Activated CD8-positive, alpha-beta T cell treated with anti-CD3 and anti-CD28 coated beads for 36 hours (primary cell): ENCODE measurements at regions of chr9 and their contacts with region 1.

Region 1: GRCh38 chr9:35675732-35676392 is 2.1 kb downstream of the CA9 start:
- DNase-seq: peak; percentile 57
- ATAC-seq: peak; percentile 86
- H3K4me3 Mint-ChIP-seq: peak overlapping the region; percentile 64
- H3K27ac Mint-ChIP-seq: no peak overlapping the region
- H3K4me1 Mint-ChIP-seq: peaks cover 13% of the 10 kb centered on the region
- H3K27me3 Mint-ChIP-seq: peaks cover 9% of the 10 kb centered on the region
- CTCF ChIP-seq: no peak

Region 2: DNA sequence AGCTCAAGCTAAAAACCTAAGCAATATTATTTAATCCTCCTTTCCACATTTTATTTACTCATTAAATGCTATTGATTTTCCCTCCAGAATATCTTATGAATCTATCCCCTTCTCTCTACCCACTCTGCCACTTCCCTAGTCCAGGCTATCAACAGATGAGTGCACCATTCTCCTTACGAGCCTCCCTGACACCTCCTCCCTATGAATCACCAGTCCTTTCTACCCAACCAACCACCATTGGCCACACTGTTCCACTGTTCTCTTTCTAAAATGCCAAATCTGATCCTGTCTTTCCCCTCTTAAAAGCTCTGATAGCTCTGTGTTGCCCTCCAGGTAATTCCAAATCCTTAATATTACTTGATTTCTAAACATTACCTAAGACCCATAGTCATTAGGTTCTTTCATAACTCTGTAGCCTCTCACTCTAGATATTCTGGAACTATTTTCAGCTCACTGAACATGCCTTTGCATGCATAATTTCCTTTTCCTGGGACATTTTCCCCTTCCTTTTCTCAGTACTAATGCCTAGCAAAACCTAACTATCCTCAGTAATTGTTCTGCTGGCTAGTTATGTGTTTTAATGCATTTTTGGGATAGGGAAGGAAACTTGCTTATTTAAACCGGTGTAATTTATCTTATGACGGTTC is 387.8 kb before region 1 on chr9:
- CTCF ChIA-PET with region 1: no interaction called
- POLR2A ChIA-PET with region 1: no interaction called
- intact Hi-C with region 1: no loop called
- DNase-seq: no peak
- ATAC-seq: no peak
- H3K4me3 Mint-ChIP-seq: no peak overlapping the region
- H3K27ac Mint-ChIP-seq: no peak overlapping the region
- H3K4me1 Mint-ChIP-seq: no peaks in the 10 kb centered on the region
- H3K27me3 Mint-ChIP-seq: peaks cover 17% of the 10 kb centered on the region
- CTCF ChIP-seq: no peak

Region 3: GRCh38 chr9:35657546-35658136 is 18.2 kb before region 1 on chr9 and contains the start of gene RMRP:
- CTCF ChIA-PET with region 1: interaction called, 11 read pairs
- POLR2A ChIA-PET with region 1: interaction called, 3 read pairs
- intact Hi-C with region 1: no loop called
- DNase-seq: peak; percentile 97
- ATAC-seq: peak; percentile 95
- H3K4me3 Mint-ChIP-seq: peak within 1 kb of the TSS; percentile 81
- H3K27ac Mint-ChIP-seq: peak within 1 kb of the TSS; percentile 96
- H3K4me1 Mint-ChIP-seq: peaks cover 59% of the 10 kb centered on the region
- H3K27me3 Mint-ChIP-seq: peaks cover 2% of the 10 kb centered on the region
- CTCF ChIP-seq: no peak
- total RNA-seq, gene RMRP: 13,164 to 13,311 TPM

Region 4: DNA sequence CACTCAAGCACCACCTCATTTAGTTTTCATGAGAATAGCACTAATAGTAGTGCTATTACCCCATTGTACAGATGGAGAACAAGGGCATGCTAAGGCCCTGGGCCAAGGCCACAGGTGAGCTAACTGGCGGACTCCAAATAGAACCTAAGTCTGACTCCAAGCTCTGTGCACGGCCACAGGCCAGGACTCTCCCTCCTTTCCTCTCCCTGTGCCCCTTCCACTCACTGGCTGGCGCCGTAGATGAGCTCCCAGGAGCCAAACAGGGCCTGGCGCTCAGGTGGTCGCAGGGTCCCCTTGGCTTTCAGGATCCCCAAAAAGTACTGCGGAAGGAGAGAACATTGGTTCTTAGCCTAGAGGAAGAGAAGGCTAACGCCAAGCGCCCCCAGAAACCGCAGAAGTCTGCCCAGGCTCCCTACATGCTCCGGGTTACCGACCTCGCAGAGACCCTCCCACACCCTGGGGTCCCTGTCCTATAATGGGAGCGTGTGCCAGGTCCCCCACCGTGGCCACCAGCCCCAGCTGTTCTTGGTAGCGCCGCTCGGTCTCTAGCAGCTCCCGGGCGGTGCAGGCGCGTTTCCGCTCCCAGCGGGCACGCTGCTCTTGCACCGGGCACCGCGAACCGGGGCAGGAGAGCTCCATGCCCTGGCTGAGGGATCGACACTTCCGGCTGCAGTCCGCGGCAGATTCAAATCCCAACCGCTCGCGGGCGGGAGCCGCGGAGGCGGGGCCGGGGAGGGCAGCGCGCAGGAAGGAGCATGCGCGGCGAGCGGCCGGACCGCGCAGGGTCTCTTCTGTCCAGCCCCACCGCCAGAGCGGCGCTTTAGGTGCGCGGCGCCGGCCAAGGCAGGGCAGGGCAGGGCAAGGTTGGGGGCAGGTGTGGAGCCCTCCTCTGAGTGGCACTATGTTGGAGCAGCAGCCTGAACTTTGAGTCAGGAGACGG is 11.1 kb before region 1 on chr9 and contains the start of gene ARHGEF39:
- CTCF ChIA-PET with region 1: interaction called, 9 read pairs
- POLR2A ChIA-PET with region 1: interaction called, 10 read pairs
- intact Hi-C with region 1: no loop called
- DNase-seq: peak; percentile 80
- ATAC-seq: peak; percentile 89
- H3K4me3 Mint-ChIP-seq: peak within 1 kb of the TSS; percentile 84
- H3K27ac Mint-ChIP-seq: peak within 1 kb of the TSS; percentile 63
- H3K4me1 Mint-ChIP-seq: peaks cover 40% of the 10 kb centered on the region
- H3K27me3 Mint-ChIP-seq: no peaks in the 10 kb centered on the region
- CTCF ChIP-seq: no peak
- total RNA-seq, gene ARHGEF39: 16.0 to 19.9 TPM